Left cardiac atrium (tissue), 4 donors: ENCODE measurements at regions of chr18 and their contacts with region 1.

Region 1: GRCh38 chr18:49768051-49768391 is 45.3 kb downstream of the ACAA2 start:
- DNase-seq: no peak
- ATAC-seq: peak; percentile 57 to 72

Region 2: GRCh38 chr18:49561289-49562193 is 206.5 kb before region 1 on chr18 and contains the start of gene LIPG:
- intact Hi-C with region 1: loop called (anchors 5 to 10 kb)
- DNase-seq: peak; percentile 29
- ATAC-seq: peak; percentile 72 to 85
- total RNA-seq, gene LIPG: 0.09 to 1.6 TPM